ENCODE measurements at regions of chr18 and their contacts with region 1.

Region 1: GRCh38 chr18:9971313-9971920 is 57.6 kb downstream of the VAPA start:
- DNase-seq: peak; percentile 63
- H3K4me3 ChIP-seq: no peak overlapping the region
- H3K27ac ChIP-seq: no peak overlapping the region
- H3K4me1 ChIP-seq: no peaks in the 10 kb centered on the region
- H3K27me3 ChIP-seq: no peaks in the 10 kb centered on the region
- CTCF ChIP-seq: peak; percentile 59 to 70

Region 2: GRCh38 chr18:10442551-10442971 is 471.1 kb after region 1 on chr18:
- CTCF ChIA-PET with region 1: no interaction called
- dilution Hi-C with region 1: no loop called
- in situ Hi-C with region 1: no loop called
- intact Hi-C with region 1: loop called (anchors 1 kb)
- DNase-seq: no peak
- H3K4me3 ChIP-seq: no peak overlapping the region
- H3K27ac ChIP-seq: no peak overlapping the region
- H3K4me1 ChIP-seq: no peaks in the 10 kb centered on the region
- H3K27me3 ChIP-seq: no peaks in the 10 kb centered on the region
- CTCF ChIP-seq: peak in 1 of 2 donors; percentile 51

Region 3: DNA sequence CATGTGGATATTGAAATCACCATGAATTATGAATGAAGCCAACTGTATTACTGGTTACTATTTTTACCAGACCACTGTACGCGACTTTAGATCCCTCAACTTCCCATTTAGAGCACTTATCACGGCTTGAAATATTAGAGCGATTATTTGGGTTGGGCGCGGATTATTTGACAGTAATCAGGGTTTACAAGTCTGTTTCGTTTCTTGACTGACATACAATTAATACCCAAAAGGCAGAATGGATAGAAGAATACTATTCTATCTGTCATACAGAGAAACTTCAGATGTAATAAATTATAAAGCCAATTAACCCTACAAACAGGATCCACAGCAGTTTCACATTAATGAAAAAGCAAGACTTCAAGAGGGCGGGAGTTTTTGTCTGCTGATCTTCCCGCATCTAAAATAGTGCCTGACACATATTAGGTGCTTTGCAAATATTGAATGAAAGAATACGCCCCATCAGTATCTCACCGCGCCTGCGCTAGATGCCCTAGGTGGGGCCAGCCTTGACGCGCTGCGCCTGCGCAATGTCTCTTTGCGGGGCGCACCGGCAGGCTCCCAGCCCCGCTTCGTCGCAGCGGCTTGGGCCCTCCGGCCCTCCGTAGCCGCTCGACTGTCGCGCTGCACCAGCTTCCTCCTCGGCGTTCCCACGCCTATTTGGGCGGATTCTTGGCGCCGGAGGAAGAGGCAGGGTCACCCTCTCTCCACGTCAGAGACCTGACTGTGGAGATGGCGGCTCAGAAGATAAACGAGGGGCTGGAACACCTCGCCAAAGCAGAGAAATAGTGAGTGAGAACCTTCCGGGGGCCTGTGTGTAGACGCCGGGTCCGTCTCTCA is 554.2 kb after region 1 on chr18 and contains the start of gene NAPG:
- CTCF ChIA-PET with region 1: no interaction called
- dilution Hi-C with region 1: no loop called
- in situ Hi-C with region 1: loop called (anchors 5 to 10 kb)
- intact Hi-C with region 1: loop called (anchors 1 kb)
- DNase-seq: peak; percentile 91
- H3K4me3 ChIP-seq: peak within 1 kb of the TSS; percentile 67 to 86 (median 78)
- H3K27ac ChIP-seq: peak within 1 kb of the TSS; percentile 74
- H3K4me1 ChIP-seq: peaks cover 23% of the 10 kb centered on the region
- H3K27me3 ChIP-seq: no peaks in the 10 kb centered on the region
- CTCF ChIP-seq: no peak
- total RNA-seq, gene NAPG: 31.0 to 51.3 TPM

Region 4: GRCh38 chr18:11149441-11150270 is 1178.2 kb after region 1 on chr18 and contains the start of gene PIEZO2:
- CTCF ChIA-PET with region 1: no interaction called
- dilution Hi-C with region 1: no loop called
- in situ Hi-C with region 1: no loop called
- intact Hi-C with region 1: loop called (anchors 10 kb)
- DNase-seq: no peak
- H3K4me3 ChIP-seq: no peak within 1 kb of the TSS
- H3K27ac ChIP-seq: no peak within 1 kb of the TSS
- H3K4me1 ChIP-seq: no peaks in the 10 kb centered on the region
- H3K27me3 ChIP-seq: peaks cover 4% of the 10 kb centered on the region
- CTCF ChIP-seq: no peak
- total RNA-seq, gene PIEZO2: 1.3 TPM in 1 of 2 donors, not detected in the other